Breast epithelium (tissue), 4 donors: ENCODE measurements at regions of chr2 and their contacts with region 1.

Region 1: DNA sequence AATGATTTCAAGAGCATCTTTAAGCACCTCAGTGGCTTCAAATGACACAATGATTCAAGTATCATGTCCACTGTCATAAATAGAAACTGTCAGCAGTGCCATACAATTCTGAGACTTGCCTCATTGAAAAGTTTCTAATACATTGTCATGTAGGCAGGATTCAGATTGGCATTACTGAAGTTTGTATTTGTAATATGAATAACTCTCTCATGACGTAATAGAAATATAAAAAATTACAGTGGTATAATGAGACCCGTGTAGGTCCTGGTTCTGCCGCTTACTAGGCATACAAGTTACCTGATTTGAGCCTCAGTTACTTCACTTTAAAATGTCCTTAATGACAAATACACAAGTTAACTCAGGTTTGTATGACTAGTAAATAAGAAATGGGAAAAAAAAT is 1536.2 kb upstream of the NXPH2 start:
- DNase-seq: no peak
- H3K4me3 ChIP-seq: no peak overlapping the region
- H3K27ac ChIP-seq: no peak overlapping the region
- H3K4me1 ChIP-seq: no peaks in the 10 kb centered on the region
- H3K27me3 ChIP-seq: no peaks in the 10 kb centered on the region
- CTCF ChIP-seq: no peak
- POLR2A ChIP-seq: no peak

Region 2: DNA sequence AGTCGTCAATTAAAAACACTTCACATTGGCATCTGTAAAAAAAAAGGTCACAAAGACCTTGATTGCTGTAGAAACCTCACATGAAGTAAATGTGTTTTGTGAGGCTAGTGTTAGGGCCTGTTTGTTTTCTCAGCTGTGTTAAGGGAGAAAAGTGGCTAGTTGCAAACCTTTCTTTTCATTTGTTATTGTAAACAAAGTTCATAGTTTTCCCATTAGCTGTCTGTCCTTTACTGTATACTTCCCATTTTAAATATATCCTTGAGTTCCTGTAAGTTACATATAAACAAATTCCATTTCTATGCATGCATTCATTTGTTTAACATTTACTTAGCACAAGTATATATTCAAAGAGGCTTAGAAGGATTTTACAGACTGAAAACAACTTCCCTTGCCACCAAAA is 564.2 kb after region 1 on chr2:
- intact Hi-C with region 1: loop called (anchors 5 kb)
- DNase-seq: no peak
- H3K4me3 ChIP-seq: no peak overlapping the region
- H3K27ac ChIP-seq: no peak overlapping the region
- H3K4me1 ChIP-seq: no peaks in the 10 kb centered on the region
- H3K27me3 ChIP-seq: no peaks in the 10 kb centered on the region
- CTCF ChIP-seq: no peak
- POLR2A ChIP-seq: no peak